AG04449 (cell line): ENCODE measurements at regions of chr17 and their contacts with region 1.

Region 1: DNA sequence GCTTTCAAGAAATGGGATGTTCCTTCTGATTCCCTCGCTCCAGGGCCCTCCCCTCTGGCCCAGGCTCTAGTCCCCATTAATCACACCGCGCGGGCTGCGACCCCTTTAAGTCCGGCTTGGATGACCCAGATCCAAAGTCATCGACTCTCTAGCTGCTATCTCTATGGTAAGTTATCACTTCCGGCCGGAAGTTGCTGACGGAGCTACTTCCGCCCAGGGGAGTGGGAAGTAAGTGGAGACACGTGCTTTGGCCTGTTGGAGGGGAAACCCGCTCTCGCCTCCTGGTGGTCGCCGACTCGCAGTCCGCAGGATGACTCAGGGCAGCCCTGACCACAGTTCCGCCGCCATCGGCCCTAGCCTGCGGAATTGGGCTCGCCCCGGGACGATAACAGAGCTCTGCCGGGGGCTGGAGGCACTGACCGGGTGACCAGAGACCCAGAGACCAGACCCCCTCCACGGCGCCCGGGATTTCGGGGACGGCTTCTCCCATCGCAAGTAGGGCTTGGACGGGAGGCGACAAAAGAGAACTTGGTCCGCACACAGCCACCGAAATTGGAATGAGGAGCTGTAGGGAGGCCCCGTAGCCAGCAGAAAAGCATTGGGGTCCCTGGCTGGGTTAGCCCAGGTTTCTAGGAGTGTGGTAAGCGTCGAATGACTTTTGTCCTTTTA is 52.2 kb upstream of the SEC14L1 start:
- DNase-seq: peak; percentile 81
- H3K4me3 ChIP-seq: peak overlapping the region; percentile 76
- CTCF ChIP-seq: peak; percentile 92

Region 2: DNA sequence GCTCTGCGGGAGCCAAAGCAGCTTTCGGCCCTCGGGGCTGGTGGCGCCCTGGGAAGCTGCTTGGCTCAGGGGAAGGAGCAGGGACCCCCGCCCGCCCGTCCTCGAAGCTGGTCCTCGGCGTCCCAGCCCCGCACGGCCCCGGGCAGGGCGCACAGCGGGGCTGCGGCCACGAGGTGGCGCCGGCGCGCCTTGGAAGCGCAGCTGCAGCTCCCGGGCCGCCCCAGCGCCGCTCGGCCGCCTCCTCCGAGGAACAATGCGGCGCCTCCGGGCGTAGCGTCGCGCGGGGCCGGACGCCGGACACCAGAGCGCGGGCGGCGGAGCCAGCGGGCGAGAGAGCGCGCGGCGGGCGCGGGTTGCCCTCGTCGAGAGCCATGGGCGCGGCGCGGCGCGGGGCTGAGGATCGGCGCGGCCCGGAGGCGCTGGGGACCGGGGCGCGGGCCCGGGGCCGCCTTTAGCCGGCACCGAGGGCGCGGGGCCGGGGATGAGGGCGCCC is 220.4 kb before region 1 on chr17 and contains the start of gene MGAT5B:
- CTCF ChIA-PET with region 1: interaction called, 33 read pairs
- POLR2A ChIA-PET with region 1: no interaction called
- DNase-seq: no peak
- H3K4me3 ChIP-seq: peak within 1 kb of the TSS; percentile 36
- CTCF ChIP-seq: peak; percentile 62

Region 3: DNA sequence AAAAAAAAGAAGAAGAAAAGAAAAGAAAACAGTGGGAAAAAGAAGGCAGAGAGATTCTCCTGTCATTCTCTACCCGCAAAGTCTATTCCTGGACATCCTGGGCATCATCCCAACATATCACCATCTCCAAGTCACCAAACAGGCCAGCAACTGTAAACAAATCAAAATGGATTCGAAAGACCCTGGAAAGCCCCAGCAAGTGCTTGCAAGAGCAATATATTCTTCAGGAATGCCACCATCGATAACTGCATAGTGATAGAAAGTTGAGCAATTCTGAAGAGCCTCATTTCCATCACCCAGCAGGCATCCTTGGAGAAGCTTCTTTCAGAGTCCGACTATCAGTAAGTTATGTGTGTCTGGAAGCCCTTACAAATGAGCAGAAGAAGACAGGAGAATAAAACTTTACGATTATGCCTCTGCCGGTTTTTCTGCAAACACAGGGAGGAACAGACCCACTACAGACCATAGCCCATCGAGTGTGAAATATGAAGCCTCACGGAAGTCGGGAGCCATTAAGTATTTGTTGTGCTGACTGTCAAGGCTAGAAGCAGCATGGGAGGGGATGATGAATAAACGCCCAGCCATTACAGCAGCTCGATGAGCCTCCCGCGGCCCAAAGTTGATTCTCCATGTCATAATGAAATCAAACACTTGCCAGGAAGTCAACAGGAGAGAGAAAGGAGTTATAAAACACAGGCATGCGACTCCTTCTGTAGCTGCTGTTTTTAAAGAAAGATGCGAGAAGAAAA is 12.3 kb before region 1 on chr17:
- CTCF ChIA-PET with region 1: interaction called, 42 read pairs
- POLR2A ChIA-PET with region 1: interaction called, 3 read pairs
- DNase-seq: no peak
- H3K4me3 ChIP-seq: no peak overlapping the region
- CTCF ChIP-seq: no peak

Region 4: DNA sequence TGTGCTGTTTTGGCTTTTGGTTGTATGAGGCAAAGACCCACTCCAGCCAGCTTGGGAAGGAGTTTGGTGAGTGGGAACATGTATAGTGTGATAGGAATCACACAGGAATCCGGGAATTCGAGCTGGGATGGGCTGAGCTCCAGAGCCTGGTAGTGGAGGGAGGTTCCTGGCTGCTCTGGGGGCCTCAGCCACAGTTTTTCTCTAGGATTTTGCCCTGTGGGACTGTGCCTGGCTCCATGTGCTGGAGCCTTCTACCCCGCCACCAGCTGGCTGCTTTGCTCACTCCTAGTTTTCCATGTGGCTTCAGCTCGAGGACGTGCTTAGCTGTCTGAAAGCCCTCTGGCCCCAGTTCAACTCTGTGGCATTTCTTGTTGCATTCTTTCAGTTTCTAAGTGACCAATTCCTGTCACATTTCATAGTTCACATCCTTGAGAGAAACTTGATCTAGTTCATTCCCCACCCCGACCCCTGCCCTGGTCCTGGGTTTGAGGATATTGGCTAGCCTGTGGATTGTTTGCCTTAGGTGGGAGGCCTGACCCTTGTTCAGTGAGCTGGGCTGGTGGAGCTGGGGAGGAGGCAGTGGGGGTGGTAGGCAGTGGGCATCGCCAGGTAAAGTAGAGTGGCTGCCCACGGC is 57.1 kb after region 1 on chr17:
- CTCF ChIA-PET with region 1: interaction called, 17 read pairs
- POLR2A ChIA-PET with region 1: interaction called, 3 read pairs
- DNase-seq: no peak
- H3K4me3 ChIP-seq: no peak overlapping the region
- CTCF ChIP-seq: peak; percentile 56

Region 5: DNA sequence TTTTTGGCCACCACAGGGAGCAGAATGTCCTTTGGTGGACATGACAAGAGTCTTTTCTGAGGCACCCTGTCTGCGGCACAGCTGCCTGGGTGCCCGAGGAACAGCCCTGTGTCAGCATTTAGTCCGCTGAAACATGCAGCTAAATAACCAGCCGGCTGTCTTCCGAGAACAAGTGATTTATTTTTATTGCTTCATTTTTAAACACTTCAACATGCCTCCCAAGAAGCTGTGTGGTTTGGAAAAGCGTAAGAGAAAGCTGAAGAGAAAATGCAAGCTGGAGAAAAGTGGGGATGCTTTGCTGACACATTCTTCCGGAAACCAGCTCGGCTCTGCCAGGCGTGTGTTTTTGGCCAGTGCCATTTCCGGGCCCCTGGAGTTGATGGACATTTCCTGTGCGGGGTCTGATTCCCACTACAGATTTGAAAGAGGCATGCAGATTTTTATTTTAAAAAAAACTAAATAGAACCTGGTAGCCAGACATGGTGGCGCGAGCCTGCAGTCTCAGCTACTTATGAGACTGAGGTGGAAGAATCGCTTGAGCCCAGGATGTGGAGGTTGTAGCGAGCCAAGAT is 146.9 kb after region 1 on chr17:
- CTCF ChIA-PET with region 1: interaction called, 41 read pairs
- POLR2A ChIA-PET with region 1: interaction called, 3 read pairs
- DNase-seq: peak; percentile 79
- H3K4me3 ChIP-seq: peak overlapping the region; percentile 53
- CTCF ChIP-seq: no peak

Region 6: DNA sequence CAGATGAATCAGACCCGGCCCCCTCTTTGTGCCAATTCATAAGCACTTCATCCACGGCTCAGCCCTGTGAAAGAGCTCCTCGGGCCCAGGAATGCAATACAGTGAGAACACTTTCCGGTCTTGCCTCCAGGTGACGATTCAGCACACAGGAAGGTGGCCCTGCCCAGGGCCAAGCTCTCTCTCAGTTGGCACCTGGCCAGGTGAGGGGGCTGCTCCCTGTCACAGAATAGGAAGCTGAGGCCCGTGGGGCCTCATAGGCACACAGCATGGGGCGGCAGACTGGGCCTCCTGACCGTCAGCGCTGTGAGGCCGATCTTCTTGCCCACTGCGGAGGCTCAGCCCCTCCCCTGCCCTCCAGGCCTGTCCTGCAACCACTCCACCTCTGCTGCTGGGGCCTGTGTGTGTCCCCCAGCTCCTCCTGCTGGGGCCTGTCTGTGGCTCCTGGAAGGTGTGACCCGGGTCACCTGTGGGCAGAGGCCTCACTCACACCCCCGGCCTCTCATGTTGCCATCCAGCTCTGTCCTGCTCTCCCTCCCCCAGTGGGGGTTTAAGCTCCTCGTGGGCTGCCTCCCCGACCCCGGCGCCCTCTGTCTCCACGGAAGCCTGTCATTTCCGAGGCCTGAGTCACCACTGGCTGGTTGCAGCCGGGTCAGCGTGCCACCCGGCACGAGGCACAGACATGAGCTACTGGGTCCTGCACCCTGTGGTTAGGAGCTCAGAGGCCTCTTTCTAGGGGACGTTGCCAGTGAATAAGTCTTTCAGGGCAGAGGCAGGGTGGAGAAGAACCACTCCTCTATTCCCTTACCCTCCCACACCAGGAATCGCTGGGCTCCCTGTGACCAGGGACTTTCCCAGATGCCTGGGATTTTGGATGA is 166.6 kb after region 1 on chr17:
- CTCF ChIA-PET with region 1: interaction called, 14 read pairs
- POLR2A ChIA-PET with region 1: no interaction called
- DNase-seq: peak; percentile 69
- H3K4me3 ChIP-seq: no peak overlapping the region
- CTCF ChIP-seq: no peak